ENCODE measurements at regions of chr3 and their contacts with region 1.

Region 1: GRCh38 chr3:134239538-134239937 is 11.1 kb downstream of the RYK start:
- DNase-seq: no peak
- H3K4me3 Mint-ChIP-seq: peak overlapping the region; percentile 5
- H3K27ac Mint-ChIP-seq: peak overlapping the region; percentile 24
- H3K4me1 Mint-ChIP-seq: peaks cover 44% of the 10 kb centered on the region
- H3K27me3 Mint-ChIP-seq: peaks cover 24% of the 10 kb centered on the region

Region 2: GRCh38 chr3:134299185-134299887 is 59.8 kb after region 1 on chr3:
- intact Hi-C with region 1: loop called (anchors 1 kb)
- DNase-seq: no peak
- H3K4me3 Mint-ChIP-seq: no peak overlapping the region
- H3K27ac Mint-ChIP-seq: no peak overlapping the region
- H3K4me1 Mint-ChIP-seq: no peaks in the 10 kb centered on the region
- H3K27me3 Mint-ChIP-seq: peaks cover 55% of the 10 kb centered on the region